Caco-2 (cell line): ENCODE measurements at regions of chr9 and their contacts with region 1.

Region 1: DNA sequence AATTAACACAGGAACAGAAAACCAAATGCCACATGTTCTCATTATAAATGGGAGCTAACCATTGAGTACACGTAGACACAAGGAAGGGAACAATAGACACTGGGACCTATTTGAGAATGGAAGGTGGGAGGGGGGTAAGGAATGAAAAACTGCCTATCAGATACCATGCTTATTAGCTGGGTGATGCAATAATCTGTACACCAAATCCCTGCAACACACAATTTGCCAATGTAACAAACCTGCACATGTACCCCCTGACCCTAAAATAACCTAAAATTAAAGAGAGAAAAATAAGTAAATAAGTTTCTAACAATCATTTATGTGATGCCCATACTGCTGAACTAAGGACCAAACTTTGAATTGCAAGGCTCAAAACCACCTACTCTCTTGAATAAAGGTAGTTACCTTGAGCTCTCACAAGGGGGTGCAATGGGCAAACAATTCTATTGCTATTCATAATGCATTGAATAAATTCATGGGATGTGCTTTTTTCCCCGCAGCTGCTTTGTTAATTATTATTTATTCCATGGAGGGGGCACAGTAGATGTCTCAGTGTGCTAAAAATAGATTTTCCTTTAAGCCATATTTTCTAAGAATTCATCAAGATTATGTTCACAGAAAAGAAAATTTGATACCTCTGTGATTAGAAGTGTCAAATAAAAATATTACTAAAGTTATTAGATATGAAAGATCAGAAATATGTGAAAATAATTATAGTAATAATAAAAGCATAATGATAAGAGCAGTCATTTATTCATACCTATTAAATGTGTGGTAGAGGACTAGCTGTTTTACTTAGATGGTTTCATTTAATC is 76.2 kb upstream of the PTPN3 start:
- DNase-seq: peak in 1 of 2 experiments; percentile 63
- H3K4me3 ChIP-seq: no peak overlapping the region
- H3K4me3 Mint-ChIP-seq: no peak overlapping the region
- H3K27ac Mint-ChIP-seq: no peak overlapping the region
- H3K4me1 ChIP-seq: no peaks in the 10 kb centered on the region
- H3K4me1 Mint-ChIP-seq: no peaks in the 10 kb centered on the region
- H3K27me3 ChIP-seq: 0 out of 2 replicates have a peak, but pooled peaks cover 2% of the 10 kb centered on the region
- H3K27me3 Mint-ChIP-seq: peaks cover 21% of the 10 kb centered on the region
- CTCF ChIP-seq: peak; percentile 64 to 72

Region 2: GRCh38 chr9:109328978-109329637 is 245.2 kb before region 1 on chr9:
- CTCF ChIA-PET with region 1: no interaction called
- POLR2A ChIA-PET with region 1: no interaction called
- intact Hi-C with region 1: no loop called
- DNase-seq: no peak
- H3K4me3 ChIP-seq: no peak overlapping the region
- H3K4me3 Mint-ChIP-seq: no peak overlapping the region
- H3K27ac Mint-ChIP-seq: peak overlapping the region; percentile 40
- H3K4me1 ChIP-seq: peaks cover 11% of the 10 kb centered on the region
- H3K4me1 Mint-ChIP-seq: peaks cover 25% of the 10 kb centered on the region
- H3K27me3 ChIP-seq: no peaks in the 10 kb centered on the region
- H3K27me3 Mint-ChIP-seq: no peaks in the 10 kb centered on the region
- CTCF ChIP-seq: no peak

Region 3: DNA sequence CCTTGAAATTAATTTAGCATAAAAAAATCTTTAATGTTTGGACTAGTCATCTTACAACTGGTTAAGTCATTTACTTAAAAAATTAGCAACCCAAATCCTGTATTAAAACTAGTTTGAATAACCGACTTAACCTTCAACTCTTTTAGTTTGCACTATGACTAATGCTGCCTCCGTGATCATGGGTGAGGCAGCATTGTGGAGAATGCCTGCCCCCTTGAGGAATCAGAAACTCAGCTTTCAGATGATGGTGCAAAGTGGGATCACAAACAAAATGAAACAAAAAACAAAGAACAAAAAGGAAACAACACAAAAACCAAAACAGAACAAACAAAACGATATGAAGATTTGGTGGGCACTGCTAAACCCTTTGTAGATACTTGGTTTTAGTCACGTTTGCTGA is 78.7 kb after region 1 on chr9:
- CTCF ChIA-PET with region 1: interaction called, 4 read pairs
- POLR2A ChIA-PET with region 1: no interaction called
- intact Hi-C with region 1: loop called (anchors 1 kb)
- DNase-seq: peak in 1 of 2 experiments; percentile 19
- H3K4me3 ChIP-seq: no peak overlapping the region
- H3K4me3 Mint-ChIP-seq: no peak overlapping the region
- H3K27ac Mint-ChIP-seq: no peak overlapping the region
- H3K4me1 ChIP-seq: no peaks in the 10 kb centered on the region
- H3K4me1 Mint-ChIP-seq: no peaks in the 10 kb centered on the region
- H3K27me3 ChIP-seq: no peaks in the 10 kb centered on the region
- H3K27me3 Mint-ChIP-seq: no peaks in the 10 kb centered on the region
- CTCF ChIP-seq: peak; percentile 19 to 60

Region 4: GRCh38 chr9:109817846-109818472 is 243.7 kb after region 1 on chr9:
- CTCF ChIA-PET with region 1: interaction called, 17 read pairs
- POLR2A ChIA-PET with region 1: no interaction called
- intact Hi-C with region 1: loop called (anchors 1 kb)
- DNase-seq: peak; percentile 70 to 78
- H3K4me3 ChIP-seq: no peak overlapping the region
- H3K4me3 Mint-ChIP-seq: no peak overlapping the region
- H3K27ac Mint-ChIP-seq: no peak overlapping the region
- H3K4me1 ChIP-seq: no peaks in the 10 kb centered on the region
- H3K4me1 Mint-ChIP-seq: no peaks in the 10 kb centered on the region
- H3K27me3 ChIP-seq: no peaks in the 10 kb centered on the region
- H3K27me3 Mint-ChIP-seq: peaks cover 3% of the 10 kb centered on the region
- CTCF ChIP-seq: peak; percentile 83 to 84

Region 5: GRCh38 chr9:109880277-109881169 is 306.2 kb after region 1 on chr9:
- CTCF ChIA-PET with region 1: no interaction called
- POLR2A ChIA-PET with region 1: no interaction called
- intact Hi-C with region 1: loop called (anchors 10 kb)
- DNase-seq: peak; percentile 47 to 50
- H3K4me3 ChIP-seq: no peak overlapping the region
- H3K4me3 Mint-ChIP-seq: no peak overlapping the region
- H3K27ac Mint-ChIP-seq: no peak overlapping the region
- H3K4me1 ChIP-seq: no peaks in the 10 kb centered on the region
- H3K4me1 Mint-ChIP-seq: no peaks in the 10 kb centered on the region
- H3K27me3 ChIP-seq: no peaks in the 10 kb centered on the region
- H3K27me3 Mint-ChIP-seq: peaks cover 3% of the 10 kb centered on the region
- CTCF ChIP-seq: peak; percentile 49 to 70

Region 6: GRCh38 chr9:110058304-110058953 is 484.2 kb after region 1 on chr9:
- CTCF ChIA-PET with region 1: no interaction called
- POLR2A ChIA-PET with region 1: no interaction called
- intact Hi-C with region 1: loop called (anchors 2 kb)
- DNase-seq: peak; percentile 78 to 79
- H3K4me3 ChIP-seq: no peak overlapping the region
- H3K4me3 Mint-ChIP-seq: no peak overlapping the region
- H3K27ac Mint-ChIP-seq: no peak overlapping the region
- H3K4me1 ChIP-seq: peaks cover 12% of the 10 kb centered on the region; the same call in 1 of the 2 replicates
- H3K4me1 Mint-ChIP-seq: peaks cover 18% of the 10 kb centered on the region
- H3K27me3 ChIP-seq: no peaks in the 10 kb centered on the region
- H3K27me3 Mint-ChIP-seq: no peaks in the 10 kb centered on the region
- CTCF ChIP-seq: peak; percentile 68 to 69